ENCODE measurements at regions of chr13 and their contacts with region 1.

Region 1: GRCh38 chr13:99182439-99182838 is 18.2 kb upstream of the UBAC2 start:
- DNase-seq: no peak
- H3K4me3 ChIP-seq: no peak overlapping the region
- H3K27ac ChIP-seq: no peak overlapping the region
- H3K4me1 ChIP-seq: no peaks in the 10 kb centered on the region
- H3K27me3 ChIP-seq: no peaks in the 10 kb centered on the region
- CTCF ChIP-seq: no peak
- EP300 ChIP-seq: no peak
- POLR2A ChIP-seq: no peak

Region 2: GRCh38 chr13:99425485-99426341 is 243.3 kb after region 1 on chr13:
- intact Hi-C with region 1: loop called (anchors 5 kb)
- DNase-seq: peak; percentile 37 to 49
- H3K4me3 ChIP-seq: no peak overlapping the region
- H3K27ac ChIP-seq: peak overlapping the region in 2 of 5 donors; percentile 31 to 60
- H3K4me1 ChIP-seq: peaks cover 0 to 14% (median 0%) of the 10 kb centered on the region in 4 donors
- H3K27me3 ChIP-seq: peaks cover 0 to 48% (median 0%) of the 10 kb centered on the region in 3 donors
- CTCF ChIP-seq: no peak
- EP300 ChIP-seq: no peak
- POLR2A ChIP-seq: no peak